ENCODE measurements at regions of chr20 and their contacts with region 1.

Region 1: DNA sequence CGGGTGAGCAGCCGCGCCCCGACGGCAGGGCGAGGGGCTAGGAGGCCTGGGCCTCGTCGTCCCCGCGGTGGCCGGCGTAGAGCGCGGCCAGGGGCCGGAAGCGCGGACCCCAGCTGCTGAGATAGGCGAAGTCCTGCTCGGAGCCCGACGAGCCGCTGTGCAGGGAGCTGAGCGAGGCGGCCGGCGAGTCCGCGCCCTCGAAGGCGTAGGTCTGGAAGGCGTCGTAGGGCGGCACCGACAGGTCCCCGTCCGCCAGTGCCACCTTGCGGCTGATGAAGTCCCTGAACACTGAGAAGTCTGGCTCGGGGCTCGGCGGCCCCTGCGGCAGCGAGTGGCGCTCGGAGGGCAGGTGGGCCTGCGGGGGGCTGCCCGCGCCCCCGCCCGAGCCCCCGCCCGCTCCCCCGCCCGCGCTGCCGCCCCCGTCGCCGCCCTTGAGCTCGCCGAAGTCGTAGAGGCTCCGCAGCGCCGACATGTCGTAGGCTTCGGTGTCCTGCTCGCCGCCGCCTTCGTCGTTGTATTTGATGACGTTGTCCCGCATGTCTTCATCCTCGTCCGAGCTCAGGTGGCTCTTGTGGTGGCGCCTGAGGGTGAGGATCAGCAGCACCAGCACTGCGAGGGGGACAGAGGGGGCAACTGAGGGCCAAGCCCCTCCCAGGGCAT is 56.5 kb downstream of the CD40 start:
- DNase-seq: peak; percentile 75 to 87
- ATAC-seq: peak; percentile 84 to 96
- H3K4me3 ChIP-seq: peak overlapping the region; percentile 31; the same call in 1 of the 3 replicates
- H3K27ac ChIP-seq: peak overlapping the region in 1 of 2 experiments; percentile 56; a peak in 1 of 6 replicates
- H3K4me1 ChIP-seq: no peaks in the 10 kb centered on the region
- CTCF ChIP-seq: peak; percentile 68
- EP300 ChIP-seq: no peak
- POLR2A ChIP-seq: no peak
- RAD21 ChIP-seq: peak; percentile 52 to 62

Region 2: GRCh38 chr20:46164254-46164653 is 10.3 kb before region 1 on chr20:
- CTCF ChIA-PET with region 1: interaction called, 16 read pairs
- POLR2A ChIA-PET with region 1: no interaction called
- DNase-seq: no peak
- ATAC-seq: no peak
- H3K4me3 ChIP-seq: no peak overlapping the region
- H3K27ac ChIP-seq: no peak overlapping the region
- H3K4me1 ChIP-seq: no peaks in the 10 kb centered on the region
- CTCF ChIP-seq: no peak
- EP300 ChIP-seq: no peak
- POLR2A ChIP-seq: no peak
- RAD21 ChIP-seq: no peak

Region 3: DNA sequence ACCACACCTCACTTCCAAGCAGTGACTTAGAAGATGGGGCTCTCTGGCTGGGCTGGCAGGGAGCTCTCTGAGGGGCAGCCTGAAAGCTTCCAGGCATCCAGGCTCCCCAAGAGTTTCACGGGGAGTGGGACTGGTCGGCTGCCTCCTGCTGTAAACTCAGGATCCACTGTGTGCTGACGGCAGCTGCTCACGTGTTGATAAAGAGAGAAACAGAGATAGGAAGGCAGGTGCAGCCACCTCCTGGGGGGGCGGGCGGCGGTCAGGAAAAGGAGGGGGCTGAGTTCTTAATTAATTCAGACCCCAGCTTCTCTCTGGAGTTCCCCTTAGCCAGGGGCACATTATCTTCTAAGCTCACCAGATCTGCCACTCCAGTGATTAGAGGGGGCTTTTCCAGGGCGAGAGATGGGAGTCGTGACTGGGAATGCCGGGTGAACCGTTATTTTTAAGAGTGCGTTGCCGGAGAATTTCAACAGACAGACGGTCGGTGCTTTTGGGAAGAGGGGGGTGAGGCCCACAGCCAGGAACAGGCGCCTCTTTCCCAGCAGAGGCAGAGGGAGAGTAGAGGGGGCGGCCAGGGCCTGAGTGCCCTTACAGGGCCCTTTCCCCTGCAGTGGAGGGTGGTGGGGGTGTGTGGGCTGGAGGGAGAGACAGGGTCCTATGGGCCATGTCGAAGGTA is 14.4 kb after region 1 on chr20:
- CTCF ChIA-PET with region 1: interaction called, 18 read pairs
- POLR2A ChIA-PET with region 1: no interaction called
- DNase-seq: no peak
- ATAC-seq: no peak
- H3K4me3 ChIP-seq: no peak overlapping the region
- H3K27ac ChIP-seq: no peak overlapping the region
- H3K4me1 ChIP-seq: no peaks in the 10 kb centered on the region
- CTCF ChIP-seq: no peak
- EP300 ChIP-seq: no peak
- POLR2A ChIP-seq: no peak
- RAD21 ChIP-seq: no peak

Region 4: GRCh38 chr20:46209930-46210671 is 35.5 kb after region 1 on chr20:
- CTCF ChIA-PET with region 1: no interaction called
- POLR2A ChIA-PET with region 1: no interaction called
- DNase-seq: no peak
- ATAC-seq: no peak
- H3K4me3 ChIP-seq: no peak overlapping the region
- H3K27ac ChIP-seq: no peak overlapping the region
- H3K4me1 ChIP-seq: peaks cover 18% of the 10 kb centered on the region
- CTCF ChIP-seq: no peak
- EP300 ChIP-seq: no peak
- POLR2A ChIP-seq: no peak
- RAD21 ChIP-seq: no peak

Region 5: GRCh38 chr20:46316984-46317684 is 142.5 kb after region 1 on chr20:
- CTCF ChIA-PET with region 1: no interaction called
- POLR2A ChIA-PET with region 1: no interaction called
- DNase-seq: no peak
- ATAC-seq: no peak
- H3K4me3 ChIP-seq: no peak overlapping the region
- H3K27ac ChIP-seq: no peak overlapping the region
- H3K4me1 ChIP-seq: no peaks in the 10 kb centered on the region; the same call in 2 of the 3 replicates
- CTCF ChIP-seq: no peak
- EP300 ChIP-seq: no peak
- POLR2A ChIP-seq: no peak
- RAD21 ChIP-seq: no peak

Measured in A549 (cell line).